Activated CD4-positive, alpha-beta T cell treated with anti-CD3 and anti-CD28 coated beads, Interleukin-2, amount 10 ng/mL, durations not matched to agents 24 days and 14 days (primary cell): ENCODE measurements at regions of chr11 and their contacts with region 1.

Region 1: DNA sequence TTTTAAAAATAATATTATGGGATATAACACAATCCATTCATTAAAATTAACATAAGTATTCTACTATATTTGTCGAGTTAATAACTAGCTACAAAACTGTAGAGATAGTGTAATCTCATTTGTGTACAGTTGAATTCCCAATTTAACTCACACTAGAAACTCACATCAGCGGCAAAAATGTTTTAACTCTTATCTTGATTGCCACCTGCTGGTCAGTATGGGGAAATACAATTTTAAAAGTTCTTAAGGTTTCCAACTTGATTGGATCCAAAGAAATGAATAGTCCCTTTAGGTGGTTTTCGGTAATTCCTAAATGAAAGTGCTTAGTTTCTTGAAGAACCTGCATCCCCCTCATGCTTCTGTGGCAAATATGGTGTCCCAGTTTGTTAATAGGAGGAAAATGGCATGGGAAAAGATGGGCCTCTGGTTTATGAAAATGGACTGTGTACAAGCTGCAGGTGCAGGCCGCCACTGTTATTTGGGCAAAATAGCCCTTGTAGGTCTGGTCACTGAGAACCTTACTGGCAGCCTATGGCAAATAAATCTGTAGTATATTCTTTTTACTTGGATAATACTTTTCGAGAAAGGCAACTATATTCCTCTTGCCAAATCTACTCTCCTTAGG is 33.7 kb upstream of the SLC17A6 start:
- DNase-seq: no peak
- H3K4me3 Mint-ChIP-seq: no peak overlapping the region
- H3K27ac Mint-ChIP-seq: no peak overlapping the region
- H3K4me1 Mint-ChIP-seq: no peaks in the 10 kb centered on the region
- H3K27me3 Mint-ChIP-seq: peaks cover 2% of the 10 kb centered on the region

Region 2: GRCh38 chr11:20647976-20648565 is 1656.4 kb before region 1 on chr11:
- intact Hi-C with region 1: loop called (anchors 5 kb)
- DNase-seq: peak; percentile 81
- H3K4me3 Mint-ChIP-seq: no peak overlapping the region
- H3K27ac Mint-ChIP-seq: no peak overlapping the region
- H3K4me1 Mint-ChIP-seq: no peaks in the 10 kb centered on the region
- H3K27me3 Mint-ChIP-seq: no peaks in the 10 kb centered on the region

Region 3: GRCh38 chr11:22169833-22170232 is 134.6 kb before region 1 on chr11:
- intact Hi-C with region 1: loop called (anchors 10 kb)
- DNase-seq: no peak
- H3K4me3 Mint-ChIP-seq: no peak overlapping the region
- H3K27ac Mint-ChIP-seq: no peak overlapping the region
- H3K4me1 Mint-ChIP-seq: no peaks in the 10 kb centered on the region
- H3K27me3 Mint-ChIP-seq: no peaks in the 10 kb centered on the region

Region 4: GRCh38 chr11:22234743-22235142 is 69.7 kb before region 1 on chr11:
- intact Hi-C with region 1: no loop called
- DNase-seq: no peak
- H3K4me3 Mint-ChIP-seq: no peak overlapping the region
- H3K27ac Mint-ChIP-seq: no peak overlapping the region
- H3K4me1 Mint-ChIP-seq: no peaks in the 10 kb centered on the region
- H3K27me3 Mint-ChIP-seq: no peaks in the 10 kb centered on the region

Region 5: GRCh38 chr11:22244986-22245592 is 59.4 kb before region 1 on chr11:
- intact Hi-C with region 1: loop called (anchors 1 kb)
- DNase-seq: peak; percentile 66
- H3K4me3 Mint-ChIP-seq: no peak overlapping the region
- H3K27ac Mint-ChIP-seq: no peak overlapping the region
- H3K4me1 Mint-ChIP-seq: no peaks in the 10 kb centered on the region
- H3K27me3 Mint-ChIP-seq: peaks cover 6% of the 10 kb centered on the region

Region 6: DNA sequence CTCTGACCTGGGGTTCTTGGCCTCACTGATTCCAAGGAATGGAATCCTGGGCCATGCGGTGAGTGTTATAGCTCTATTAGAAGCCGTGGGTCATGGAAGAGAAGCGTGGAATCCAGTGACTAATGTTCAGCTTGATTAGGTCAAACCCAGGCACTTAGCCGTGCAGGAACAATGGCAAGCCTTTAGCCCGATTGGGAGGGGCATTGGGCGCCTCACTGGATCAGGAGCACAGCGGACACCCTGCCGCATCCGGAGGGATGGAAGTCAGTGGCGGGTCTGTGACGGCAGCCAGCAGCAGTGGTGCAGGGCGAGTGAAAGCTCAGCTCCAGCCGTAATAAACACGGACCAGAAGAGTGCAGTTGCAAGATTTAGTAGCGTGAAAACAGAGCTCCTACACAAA is 13.2 kb after region 1 on chr11:
- intact Hi-C with region 1: no loop called
- DNase-seq: no peak
- H3K4me3 Mint-ChIP-seq: no peak overlapping the region
- H3K27ac Mint-ChIP-seq: no peak overlapping the region
- H3K4me1 Mint-ChIP-seq: no peaks in the 10 kb centered on the region
- H3K27me3 Mint-ChIP-seq: no peaks in the 10 kb centered on the region